Mammary epithelial cell (primary cell): ENCODE measurements at regions of chr2 and their contacts with region 1.

Region 1: GRCh38 chr2:2846332-2847208 is 515.5 kb upstream of the MYT1L start:
- DNase-seq: peak; percentile 5
- H3K4me3 ChIP-seq: no peak overlapping the region
- H3K27ac ChIP-seq: no peak overlapping the region
- H3K4me1 ChIP-seq: no peaks in the 10 kb centered on the region
- H3K27me3 ChIP-seq: no peaks in the 10 kb centered on the region
- CTCF ChIP-seq: no peak

Region 2: DNA sequence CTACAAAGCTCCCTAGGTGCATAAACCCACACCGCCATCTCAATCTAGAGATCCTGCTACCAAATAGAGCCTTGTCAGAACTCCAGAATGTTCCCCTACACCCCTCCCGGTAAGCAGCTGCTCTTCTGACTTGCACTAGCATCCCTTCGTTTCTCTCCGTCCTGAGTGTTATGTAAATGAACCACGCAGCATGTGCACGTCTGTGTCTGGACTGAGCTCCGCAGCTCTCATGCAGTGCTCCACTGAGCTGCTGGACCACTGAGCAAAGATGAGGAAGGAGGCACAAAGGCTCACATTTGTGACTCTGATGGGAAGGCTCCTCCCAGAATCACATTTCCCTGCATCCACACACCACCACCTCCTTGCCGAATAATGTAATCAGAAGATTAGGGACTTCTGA is 719.1 kb before region 1 on chr2:
- CTCF ChIA-PET with region 1: no interaction called
- dilution Hi-C with region 1: no loop called
- in situ Hi-C with region 1: no loop called
- intact Hi-C with region 1: loop called (anchors 10 kb)
- DNase-seq: no peak
- H3K4me3 ChIP-seq: no peak overlapping the region
- H3K27ac ChIP-seq: no peak overlapping the region
- H3K4me1 ChIP-seq: no peaks in the 10 kb centered on the region
- H3K27me3 ChIP-seq: no peaks in the 10 kb centered on the region
- CTCF ChIP-seq: no peak

Region 3: GRCh38 chr2:2787301-2787907 is 59.2 kb before region 1 on chr2:
- CTCF ChIA-PET with region 1: no interaction called
- dilution Hi-C with region 1: loop called (anchors 5 kb)
- in situ Hi-C with region 1: no loop called
- intact Hi-C with region 1: no loop called
- DNase-seq: no peak
- H3K4me3 ChIP-seq: no peak overlapping the region
- H3K27ac ChIP-seq: no peak overlapping the region
- H3K4me1 ChIP-seq: no peaks in the 10 kb centered on the region
- H3K27me3 ChIP-seq: no peaks in the 10 kb centered on the region
- CTCF ChIP-seq: no peak

Region 4: DNA sequence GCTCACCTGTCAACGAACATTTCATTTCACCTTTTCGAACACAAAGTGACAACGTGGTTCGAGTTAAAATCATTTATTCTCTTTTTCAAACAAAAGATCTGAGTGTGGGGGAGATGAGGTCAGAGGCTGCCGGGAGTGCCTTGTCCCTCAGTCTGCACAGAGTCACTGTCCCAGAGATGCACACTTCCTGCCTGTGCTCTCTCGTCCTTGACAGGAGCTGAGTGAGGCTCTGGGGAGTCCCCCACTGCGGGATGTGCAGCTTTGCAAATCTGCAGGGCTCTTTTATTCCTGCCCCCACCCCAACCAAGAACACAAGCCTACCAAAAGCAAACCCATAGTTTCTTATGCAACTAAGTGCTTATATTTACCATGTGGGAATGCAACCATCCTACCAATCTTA is 33.2 kb after region 1 on chr2:
- CTCF ChIA-PET with region 1: no interaction called
- dilution Hi-C with region 1: no loop called
- in situ Hi-C with region 1: no loop called
- intact Hi-C with region 1: no loop called
- DNase-seq: no peak
- H3K4me3 ChIP-seq: no peak overlapping the region
- H3K27ac ChIP-seq: no peak overlapping the region
- H3K4me1 ChIP-seq: no peaks in the 10 kb centered on the region
- H3K27me3 ChIP-seq: no peaks in the 10 kb centered on the region
- CTCF ChIP-seq: no peak